ENCODE measurements at regions of chr7 and their contacts with region 1.

Region 1: GRCh38 chr7:142557971-142558582 is 191.2 kb upstream of the PRSS1 start:
- DNase-seq: peak in 1 of 2 experiments; percentile 14
- H3K4me3 ChIP-seq: no peak overlapping the region
- H3K27ac ChIP-seq: peak overlapping the region; percentile 78
- H3K4me1 ChIP-seq: peaks cover 55% of the 10 kb centered on the region
- H3K27me3 ChIP-seq: no peaks in the 10 kb centered on the region
- CTCF ChIP-seq: peak; percentile 74

Region 2: GRCh38 chr7:142440219-142440905 is 117.7 kb before region 1 on chr7:
- CTCF ChIA-PET with region 1: interaction called, 3 read pairs
- POLR2A ChIA-PET with region 1: no interaction called
- intact Hi-C with region 1: loop called (anchors 1 kb)
- DNase-seq: peak; percentile 67 to 90
- H3K4me3 ChIP-seq: peak overlapping the region; percentile 16; the same call in 1 of the 2 replicates
- H3K27ac ChIP-seq: peak overlapping the region; percentile 79
- H3K4me1 ChIP-seq: peaks cover 46% of the 10 kb centered on the region
- H3K27me3 ChIP-seq: no peaks in the 10 kb centered on the region
- CTCF ChIP-seq: no peak

Region 3: GRCh38 chr7:142516038-142516501 is 42.0 kb before region 1 on chr7:
- CTCF ChIA-PET with region 1: no interaction called
- POLR2A ChIA-PET with region 1: no interaction called
- intact Hi-C with region 1: loop called (anchors 2 kb)
- DNase-seq: peak; percentile 72 to 87
- H3K4me3 ChIP-seq: no peak overlapping the region
- H3K27ac ChIP-seq: peak overlapping the region; percentile 79
- H3K4me1 ChIP-seq: peaks cover 48% of the 10 kb centered on the region
- H3K27me3 ChIP-seq: no peaks in the 10 kb centered on the region
- CTCF ChIP-seq: peak; percentile 97

Region 4: DNA sequence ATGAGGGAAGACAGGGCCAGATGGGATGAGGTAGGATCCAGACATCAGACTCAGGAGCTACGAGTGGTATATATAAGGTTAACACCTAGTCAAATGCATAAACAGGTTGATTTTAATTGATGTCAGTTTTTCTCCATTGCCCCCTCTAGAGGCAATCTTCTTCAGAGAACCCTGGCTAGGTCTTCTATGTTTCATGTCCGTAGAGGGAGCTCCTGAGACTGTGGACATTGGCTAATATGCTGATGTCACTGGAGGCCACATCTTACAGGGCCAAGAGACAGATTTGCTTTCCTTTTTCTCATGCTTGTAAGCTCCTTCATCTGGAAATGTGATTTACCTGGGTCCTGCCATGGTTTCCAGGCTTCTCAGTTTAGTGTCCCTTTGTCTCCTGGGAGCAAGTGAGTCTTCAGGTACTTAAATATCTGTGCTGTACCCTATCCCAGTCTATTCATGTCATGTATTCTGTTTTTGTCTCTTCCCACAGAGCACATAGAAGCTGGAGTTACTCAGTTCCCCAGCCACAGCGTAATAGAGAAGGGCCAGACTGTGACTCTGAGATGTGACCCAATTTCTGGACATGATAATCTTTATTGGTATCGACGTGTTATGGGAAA is 29.6 kb after region 1 on chr7:
- CTCF ChIA-PET with region 1: interaction called, 6 read pairs
- POLR2A ChIA-PET with region 1: interaction called, 4 read pairs
- intact Hi-C with region 1: loop called (anchors 2 kb)
- DNase-seq: peak; percentile 30 to 77
- H3K4me3 ChIP-seq: no peak overlapping the region
- H3K27ac ChIP-seq: 0 out of 2 replicates have a peak overlapping the region, but pooled peaks have one; percentile 27
- H3K4me1 ChIP-seq: peaks cover 26% of the 10 kb centered on the region
- H3K27me3 ChIP-seq: no peaks in the 10 kb centered on the region
- CTCF ChIP-seq: peak; percentile 78